PC-3 (cell line): ENCODE measurements at regions of chr1 and their contacts with region 1.

Region 1: DNA sequence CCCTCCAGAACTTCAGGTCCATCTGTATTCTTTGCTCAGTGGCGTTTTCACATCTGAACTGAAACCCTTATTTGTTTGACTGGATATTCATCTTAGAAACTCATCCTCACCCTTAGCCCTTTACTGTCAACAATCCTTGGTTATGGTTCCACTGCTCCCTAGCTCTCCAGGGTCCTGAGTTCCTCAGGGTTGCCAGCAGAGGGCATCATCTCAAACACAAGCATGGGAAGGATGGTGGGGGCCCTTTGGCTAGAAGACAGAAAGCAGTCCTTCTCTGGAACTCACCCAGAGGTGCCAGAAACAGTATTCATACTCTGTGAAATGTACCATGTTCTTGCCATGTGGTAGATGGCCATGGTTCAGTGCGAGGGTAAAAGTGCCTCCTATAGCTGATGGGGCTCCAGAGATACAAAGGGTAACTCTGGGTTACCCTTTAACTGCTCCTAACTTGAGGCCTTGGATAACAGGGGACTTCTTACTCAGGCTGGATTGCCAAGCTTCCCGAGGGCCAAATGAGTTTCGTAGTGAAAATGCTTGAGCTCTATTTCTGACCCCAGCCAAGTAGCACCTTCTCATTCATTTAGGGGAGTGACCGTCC is 11.3 kb downstream of the NCSTN start:
- DNase-seq: peak; percentile 37
- ATAC-seq: peak; percentile 48; the same call in 1 of the 2 replicates
- H3K4me3 ChIP-seq: no peak overlapping the region
- H3K27ac ChIP-seq: no peak overlapping the region
- H3K4me1 ChIP-seq: no peaks in the 10 kb centered on the region
- H3K27me3 ChIP-seq: no peaks in the 10 kb centered on the region
- CTCF ChIP-seq: peak; percentile 84

Region 2: DNA sequence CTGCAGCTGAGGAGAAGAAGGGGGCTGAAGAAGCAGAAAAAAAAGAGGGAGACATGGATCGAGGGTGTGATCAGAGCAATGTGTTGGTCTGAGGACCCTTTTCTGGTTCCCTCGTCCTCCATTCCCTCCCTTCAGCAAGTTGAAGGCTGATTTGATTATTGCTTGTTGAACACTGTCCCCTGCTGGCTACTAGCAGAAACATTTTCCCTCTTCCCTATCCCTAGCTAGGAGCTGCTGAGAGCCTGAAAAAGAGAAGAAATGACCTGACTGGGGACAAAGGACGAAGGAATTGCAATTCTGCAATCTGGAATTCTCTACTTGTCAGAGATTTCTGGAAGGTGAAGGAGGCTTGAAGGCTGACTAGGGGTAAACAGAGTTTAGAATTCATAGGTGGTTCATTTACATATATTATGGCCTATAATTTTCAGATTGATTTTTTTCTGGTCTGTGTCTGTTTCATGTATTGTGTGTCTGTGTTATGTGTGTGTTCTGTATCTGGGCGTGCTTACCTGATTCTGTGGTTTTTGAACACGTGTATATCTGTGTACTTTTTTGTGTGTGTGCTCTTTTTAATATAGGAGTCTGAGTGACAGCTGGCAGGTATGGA is 22.1 kb after region 1 on chr1:
- CTCF ChIA-PET with region 1: interaction called, 4 read pairs
- POLR2A ChIA-PET with region 1: no interaction called
- intact Hi-C with region 1: loop called (anchors 1 kb)
- DNase-seq: peak; percentile 78
- ATAC-seq: peak; percentile 80
- H3K4me3 ChIP-seq: no peak overlapping the region
- H3K27ac ChIP-seq: no peak overlapping the region
- H3K4me1 ChIP-seq: peaks cover 7% of the 10 kb centered on the region; the same call in 1 of the 2 replicates
- H3K27me3 ChIP-seq: no peaks in the 10 kb centered on the region
- CTCF ChIP-seq: peak; percentile 97